ENCODE measurements at regions of chr6 and their contacts with region 1.

Region 1: GRCh38 chr6:139291813-139292619 is at the start of gene TXLNB:
- DNase-seq: peak; percentile 77 to 92
- H3K4me3 ChIP-seq: no peak within 1 kb of the TSS
- CTCF ChIP-seq: no peak
- POLR2A ChIP-seq: no peak
- total RNA-seq, gene TXLNB: 0.27 to 0.29 TPM in 2 of 4 donors, not detected in the others

Region 2: DNA sequence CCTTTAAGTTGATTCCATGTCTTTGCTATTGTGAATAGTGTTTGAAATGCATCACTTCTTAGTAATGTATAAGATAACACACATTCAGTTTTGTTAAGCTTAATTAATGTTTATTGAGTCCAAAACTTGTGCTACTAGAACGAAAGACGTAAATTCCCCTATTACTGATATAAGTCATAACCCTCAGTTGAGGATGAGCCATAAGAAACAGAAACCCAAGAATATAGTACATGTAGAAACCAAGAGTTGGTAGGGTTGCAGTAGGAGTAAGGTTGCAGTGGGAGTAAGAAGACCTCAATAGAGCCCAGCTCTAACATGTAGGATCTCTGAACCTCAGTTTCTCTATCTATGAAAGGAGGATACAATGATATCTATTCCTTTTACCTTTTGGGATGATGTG is 63.2 kb after region 1 on chr6:
- intact Hi-C with region 1: loop called (anchors 10 kb)
- DNase-seq: no peak
- H3K4me3 ChIP-seq: no peak overlapping the region
- CTCF ChIP-seq: no peak
- POLR2A ChIP-seq: no peak